ENCODE measurements at regions of chr15 and their contacts with region 1.

Region 1: GRCh38 chr15:96345560-96346399 is 15.3 kb downstream of the NR2F2 start:
- DNase-seq: no peak
- ATAC-seq: peak; percentile 73
- H3K4me3 ChIP-seq: 0 out of 2 replicates have a peak overlapping the region, but pooled peaks have one; percentile 22
- H3K27ac ChIP-seq: no peak overlapping the region
- H3K4me1 ChIP-seq: no peaks in the 10 kb centered on the region
- H3K27me3 ChIP-seq: no peaks in the 10 kb centered on the region
- CTCF ChIP-seq: peak; percentile 59 to 79 (median 68)
- EP300 ChIP-seq: peak in 1 of 2 experiments; percentile 7; a peak in 1 of 4 replicates
- POLR2A ChIP-seq: no peak
- RAD21 ChIP-seq: peak; percentile 84

Region 2: GRCh38 chr15:95503640-95504227 is 842.0 kb before region 1 on chr15:
- CTCF ChIA-PET with region 1: no interaction called
- POLR2A ChIA-PET with region 1: no interaction called
- RAD21 ChIA-PET with region 1: no interaction called
- SMC1A ChIA-PET with region 1: interaction called, 3 read pairs
- in situ Hi-C with region 1: no loop called
- intact Hi-C with region 1: loop called (anchors 10 kb)
- DNase-seq: peak; percentile 69
- ATAC-seq: peak; percentile 95
- H3K4me3 ChIP-seq: no peak overlapping the region
- H3K27ac ChIP-seq: no peak overlapping the region
- H3K4me1 ChIP-seq: no peaks in the 10 kb centered on the region
- H3K27me3 ChIP-seq: no peaks in the 10 kb centered on the region
- CTCF ChIP-seq: no peak
- EP300 ChIP-seq: peak; percentile 97 to 98
- POLR2A ChIP-seq: no peak
- RAD21 ChIP-seq: no peak

Region 3: GRCh38 chr15:95845862-95846515 is 499.8 kb before region 1 on chr15:
- CTCF ChIA-PET with region 1: no interaction called
- POLR2A ChIA-PET with region 1: interaction called, 3 read pairs
- RAD21 ChIA-PET with region 1: no interaction called
- SMC1A ChIA-PET with region 1: no interaction called
- in situ Hi-C with region 1: no loop called
- intact Hi-C with region 1: loop called (anchors 5 kb)
- DNase-seq: no peak
- ATAC-seq: peak; percentile 58
- H3K4me3 ChIP-seq: no peak overlapping the region
- H3K27ac ChIP-seq: peak overlapping the region; percentile 51
- H3K4me1 ChIP-seq: peaks cover 7% of the 10 kb centered on the region; the same call in 1 of the 2 replicates
- H3K27me3 ChIP-seq: no peaks in the 10 kb centered on the region
- CTCF ChIP-seq: no peak
- EP300 ChIP-seq: no peak
- POLR2A ChIP-seq: no peak
- RAD21 ChIP-seq: no peak

Region 4: GRCh38 chr15:95972041-95972553 is 373.7 kb before region 1 on chr15:
- CTCF ChIA-PET with region 1: no interaction called
- POLR2A ChIA-PET with region 1: no interaction called
- RAD21 ChIA-PET with region 1: interaction called, 3 read pairs
- SMC1A ChIA-PET with region 1: interaction called, 4 read pairs
- in situ Hi-C with region 1: no loop called
- intact Hi-C with region 1: loop called (anchors 5 kb)
- DNase-seq: no peak
- ATAC-seq: no peak
- H3K4me3 ChIP-seq: no peak overlapping the region
- H3K27ac ChIP-seq: no peak overlapping the region
- H3K4me1 ChIP-seq: peaks cover 32% of the 10 kb centered on the region
- H3K27me3 ChIP-seq: no peaks in the 10 kb centered on the region
- CTCF ChIP-seq: no peak
- EP300 ChIP-seq: no peak
- POLR2A ChIP-seq: no peak
- RAD21 ChIP-seq: no peak

Region 5: GRCh38 chr15:96321639-96322535 is 23.9 kb before region 1 on chr15:
- CTCF ChIA-PET with region 1: interaction called, 212 read pairs
- POLR2A ChIA-PET with region 1: interaction called, 163 read pairs
- RAD21 ChIA-PET with region 1: interaction called, 252 read pairs
- SMC1A ChIA-PET with region 1: interaction called, 105 read pairs
- in situ Hi-C with region 1: no loop called
- intact Hi-C with region 1: loop called (anchors 1 kb)
- DNase-seq: no peak
- ATAC-seq: peak; percentile 31
- H3K4me3 ChIP-seq: peak overlapping the region; percentile 47
- H3K27ac ChIP-seq: no peak overlapping the region
- H3K4me1 ChIP-seq: peaks cover 3% of the 10 kb centered on the region; the same call in 1 of the 2 replicates
- H3K27me3 ChIP-seq: peaks cover 0 to 18% of the 10 kb centered on the region in 2 experiments; a peak in 2 of 4 replicates
- CTCF ChIP-seq: peak in 1 of 3 experiments; percentile 17; a peak in 1 of 6 replicates
- EP300 ChIP-seq: no peak
- POLR2A ChIP-seq: no peak
- RAD21 ChIP-seq: no peak

Region 6: DNA sequence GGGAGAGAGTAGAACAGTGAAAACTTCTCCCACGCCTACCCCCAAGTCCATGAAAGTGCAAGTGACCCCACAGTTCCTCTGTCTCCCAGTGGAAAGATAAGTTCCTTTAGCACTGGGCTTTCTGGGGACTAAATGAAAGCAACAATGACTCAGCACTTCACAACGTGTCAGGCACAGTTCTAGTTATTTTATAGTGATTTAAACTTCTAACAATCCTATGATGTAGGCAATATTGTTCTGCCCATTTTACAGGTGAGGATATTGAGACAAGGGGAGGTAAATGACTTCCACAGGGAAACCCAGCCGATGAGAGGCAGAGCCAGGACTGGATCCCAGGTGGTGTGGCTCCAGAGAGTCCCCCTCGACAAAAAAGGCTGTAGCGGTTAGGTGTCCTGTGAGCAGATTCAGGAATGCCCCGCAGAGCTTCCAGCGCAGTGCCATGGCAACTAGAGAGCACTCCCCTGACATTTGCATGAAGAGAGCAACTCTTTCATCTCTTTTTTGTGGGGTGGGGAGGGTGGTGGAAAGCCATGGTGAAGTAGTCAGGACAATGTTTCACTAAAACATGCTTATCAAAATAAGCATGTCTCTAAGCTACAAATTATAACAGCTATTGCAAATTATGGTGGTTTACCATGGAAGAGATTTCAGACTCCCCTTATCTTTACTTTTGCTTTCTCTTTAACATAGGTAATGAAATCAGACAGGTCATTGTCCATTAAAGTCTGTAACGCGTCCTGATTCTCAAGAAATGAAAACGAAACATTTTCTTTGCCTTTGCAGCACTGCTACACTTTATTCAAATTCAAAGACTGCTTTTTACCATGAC is 46.8 kb after region 1 on chr15:
- CTCF ChIA-PET with region 1: no interaction called
- POLR2A ChIA-PET with region 1: no interaction called
- RAD21 ChIA-PET with region 1: no interaction called
- SMC1A ChIA-PET with region 1: no interaction called
- in situ Hi-C with region 1: no loop called
- intact Hi-C with region 1: no loop called
- DNase-seq: no peak
- ATAC-seq: peak; percentile 45
- H3K4me3 ChIP-seq: no peak overlapping the region
- H3K27ac ChIP-seq: no peak overlapping the region
- H3K4me1 ChIP-seq: no peaks in the 10 kb centered on the region
- H3K27me3 ChIP-seq: no peaks in the 10 kb centered on the region
- CTCF ChIP-seq: no peak
- EP300 ChIP-seq: no peak
- POLR2A ChIP-seq: no peak
- RAD21 ChIP-seq: no peak

Region 7: DNA sequence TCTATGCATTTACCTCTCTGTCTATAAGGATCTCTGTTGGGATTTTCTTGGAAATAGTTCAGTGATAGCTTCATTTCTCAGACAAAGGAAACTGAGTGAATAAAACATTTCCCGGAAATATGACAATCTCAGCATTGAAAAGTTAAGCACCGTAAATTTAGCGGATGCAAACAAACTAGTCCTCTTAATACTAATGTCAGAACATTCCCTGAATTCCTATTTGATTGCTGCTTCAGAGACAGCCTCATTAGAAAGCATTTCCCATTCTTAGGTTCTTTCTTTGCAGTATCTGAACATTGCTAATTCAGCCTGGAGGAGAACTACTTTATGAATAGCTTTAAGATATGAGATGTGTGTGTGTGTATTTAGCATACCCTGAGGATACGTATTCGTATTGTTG is 86.0 kb after region 1 on chr15:
- CTCF ChIA-PET with region 1: no interaction called
- POLR2A ChIA-PET with region 1: no interaction called
- RAD21 ChIA-PET with region 1: no interaction called
- SMC1A ChIA-PET with region 1: no interaction called
- in situ Hi-C with region 1: no loop called
- intact Hi-C with region 1: no loop called
- DNase-seq: no peak
- ATAC-seq: no peak
- H3K4me3 ChIP-seq: no peak overlapping the region
- H3K27ac ChIP-seq: no peak overlapping the region
- H3K4me1 ChIP-seq: no peaks in the 10 kb centered on the region
- H3K27me3 ChIP-seq: no peaks in the 10 kb centered on the region; a peak in 2 of 4 replicates
- CTCF ChIP-seq: no peak
- EP300 ChIP-seq: no peak
- POLR2A ChIP-seq: no peak
- RAD21 ChIP-seq: no peak

Region 8: DNA sequence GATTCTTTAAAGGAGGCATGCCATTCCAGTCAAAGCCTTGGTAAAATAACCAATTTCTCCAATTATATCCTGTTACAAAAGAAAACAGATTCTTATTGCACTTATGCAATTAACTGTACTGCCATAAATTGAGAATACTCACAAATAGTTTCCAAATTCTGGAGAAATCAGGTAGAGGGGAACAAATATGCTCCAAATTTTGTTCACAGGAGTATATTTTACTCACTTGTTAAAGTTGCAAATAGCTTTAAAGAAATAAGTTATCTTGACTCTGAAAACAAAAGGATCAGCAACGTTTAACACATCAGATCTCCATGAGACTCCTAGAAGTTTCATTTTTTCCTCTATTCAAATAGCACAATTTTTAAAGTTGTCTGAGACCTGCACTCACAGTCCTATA is 902.6 kb after region 1 on chr15:
- CTCF ChIA-PET with region 1: interaction called, 7 read pairs
- POLR2A ChIA-PET with region 1: no interaction called
- RAD21 ChIA-PET with region 1: interaction called, 7 read pairs
- SMC1A ChIA-PET with region 1: interaction called, 12 read pairs
- in situ Hi-C with region 1: no loop called
- intact Hi-C with region 1: no loop called
- DNase-seq: no peak
- ATAC-seq: no peak
- H3K4me3 ChIP-seq: no peak overlapping the region
- H3K27ac ChIP-seq: no peak overlapping the region
- H3K4me1 ChIP-seq: no peaks in the 10 kb centered on the region
- H3K27me3 ChIP-seq: no peaks in the 10 kb centered on the region
- CTCF ChIP-seq: no peak
- EP300 ChIP-seq: no peak
- POLR2A ChIP-seq: no peak
- RAD21 ChIP-seq: no peak

Measured in GM12878 (cell line).